ENCODE measurements at regions of chr1 and their contacts with region 1.

Region 1: GRCh38 chr1:248858891-248859889 is at the start of gene ZNF692:
- DNase-seq: peak; percentile 99
- H3K4me3 Mint-ChIP-seq: peak within 1 kb of the TSS; percentile 96
- H3K27ac Mint-ChIP-seq: peak within 1 kb of the TSS; percentile 98
- H3K4me1 Mint-ChIP-seq: peaks cover 51% of the 10 kb centered on the region
- H3K27me3 Mint-ChIP-seq: no peaks in the 10 kb centered on the region
- total RNA-seq, gene ZNF692: 94.9 and 100 TPM in 2 replicates

Region 2: GRCh38 chr1:248225537-248225936 is 633.7 kb before region 1 on chr1:
- intact Hi-C with region 1: no loop called
- DNase-seq: no peak
- H3K4me3 Mint-ChIP-seq: no peak overlapping the region
- H3K27ac Mint-ChIP-seq: no peak overlapping the region
- H3K4me1 Mint-ChIP-seq: no peaks in the 10 kb centered on the region
- H3K27me3 Mint-ChIP-seq: no peaks in the 10 kb centered on the region

Region 3: GRCh38 chr1:248779350-248779749 is 79.8 kb before region 1 on chr1:
- intact Hi-C with region 1: no loop called
- DNase-seq: peak; percentile 34
- H3K4me3 Mint-ChIP-seq: no peak overlapping the region
- H3K27ac Mint-ChIP-seq: no peak overlapping the region
- H3K4me1 Mint-ChIP-seq: no peaks in the 10 kb centered on the region
- H3K27me3 Mint-ChIP-seq: no peaks in the 10 kb centered on the region

Region 4: DNA sequence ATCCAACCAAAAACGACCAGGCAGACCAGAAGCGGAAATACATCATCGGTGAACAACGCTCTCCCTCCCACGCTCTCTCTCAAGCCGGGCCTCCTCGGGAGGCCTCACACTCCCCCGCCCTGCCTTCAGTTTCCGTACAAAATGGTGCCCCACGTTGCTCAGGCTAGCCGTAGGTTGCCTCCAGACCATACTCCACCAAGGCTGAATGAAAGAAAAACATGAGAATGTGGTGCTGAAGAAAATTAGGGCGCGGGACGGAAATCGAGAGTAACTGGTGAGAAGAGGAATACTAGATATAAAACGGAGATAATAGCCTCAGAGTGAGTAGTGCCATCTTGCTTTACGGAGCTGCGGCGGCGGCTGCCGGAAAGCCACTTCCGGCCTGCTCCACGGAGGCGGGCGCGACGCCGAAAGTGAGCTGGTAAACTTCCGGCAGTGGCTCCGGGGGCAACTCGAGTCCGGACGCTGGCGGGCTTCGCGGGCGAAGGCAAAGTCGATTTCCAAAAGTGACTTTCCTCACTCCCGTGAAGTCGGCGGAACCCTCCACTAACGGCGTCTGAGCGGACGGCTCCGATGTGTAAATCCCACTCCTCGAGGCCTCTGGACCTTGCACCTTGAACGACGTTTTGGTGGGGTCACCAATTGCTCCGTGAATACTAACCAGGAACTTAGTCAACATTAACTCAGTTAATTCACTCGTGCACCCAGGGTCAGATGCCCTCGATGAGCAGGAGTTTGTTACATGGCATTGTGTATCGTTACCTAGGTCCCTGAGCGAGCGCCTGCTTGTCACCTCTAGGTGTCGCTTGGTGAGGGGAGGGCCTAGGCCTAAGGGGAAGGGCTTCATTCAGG is 33.1 kb before region 1 on chr1 and contains the start of gene SH3BP5L:
- intact Hi-C with region 1: loop called (anchors 1 kb)
- DNase-seq: peak; percentile 97
- H3K4me3 Mint-ChIP-seq: peak within 1 kb of the TSS; percentile 93
- H3K27ac Mint-ChIP-seq: peak within 1 kb of the TSS; percentile 100
- H3K4me1 Mint-ChIP-seq: peaks cover 45% of the 10 kb centered on the region
- H3K27me3 Mint-ChIP-seq: peaks cover 5% of the 10 kb centered on the region
- total RNA-seq, gene SH3BP5L: 27.5 and 28.2 TPM in 2 replicates

Region 5: DNA sequence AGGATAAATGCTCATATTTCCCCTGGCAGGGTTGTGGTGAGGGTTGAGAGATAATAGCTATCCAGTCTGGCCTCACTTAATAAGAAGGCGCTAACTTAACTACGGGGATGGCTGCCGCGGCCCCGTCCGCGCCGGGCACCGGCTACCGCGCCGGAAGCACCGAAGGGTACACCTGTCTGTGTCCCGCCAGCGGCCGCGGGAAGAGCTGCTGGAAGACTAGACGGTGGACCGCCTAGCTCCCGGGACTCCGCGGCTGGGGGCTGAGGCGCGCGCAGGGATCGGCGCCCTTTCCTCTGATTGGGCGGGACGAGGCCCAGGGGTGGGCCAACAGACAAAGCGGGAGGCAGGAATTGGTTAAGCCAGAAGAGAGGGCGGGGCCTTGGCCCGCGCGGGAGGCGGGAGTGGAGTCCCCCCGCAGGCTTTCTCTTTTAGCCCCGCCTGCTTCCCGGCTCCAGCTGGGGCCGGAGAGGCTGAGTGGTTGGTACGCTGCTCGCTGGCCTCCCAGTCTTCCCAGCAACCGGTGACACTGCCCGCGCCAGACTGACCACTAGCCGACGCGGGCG is 21.3 kb before region 1 on chr1 and contains the start of gene ZNF672:
- intact Hi-C with region 1: loop called (anchors 1 kb)
- DNase-seq: peak; percentile 99
- H3K4me3 Mint-ChIP-seq: no peak within 1 kb of the TSS
- H3K27ac Mint-ChIP-seq: no peak within 1 kb of the TSS
- H3K4me1 Mint-ChIP-seq: peaks cover 28% of the 10 kb centered on the region
- H3K27me3 Mint-ChIP-seq: peaks cover 2% of the 10 kb centered on the region
- total RNA-seq, gene ZNF672: 44.0 and 48.8 TPM in 2 replicates

Measured in activated CD4-positive, alpha-beta T cell treated with anti-CD3 and anti-CD28 coated beads, Interleukin-2, amount 10 ng/mL, durations not matched to agents 24 days and 14 days (primary cell).